Esophagus squamous epithelium (tissue), 5 donors: ENCODE measurements at regions of chr6 and their contacts with region 1.

Region 1: DNA sequence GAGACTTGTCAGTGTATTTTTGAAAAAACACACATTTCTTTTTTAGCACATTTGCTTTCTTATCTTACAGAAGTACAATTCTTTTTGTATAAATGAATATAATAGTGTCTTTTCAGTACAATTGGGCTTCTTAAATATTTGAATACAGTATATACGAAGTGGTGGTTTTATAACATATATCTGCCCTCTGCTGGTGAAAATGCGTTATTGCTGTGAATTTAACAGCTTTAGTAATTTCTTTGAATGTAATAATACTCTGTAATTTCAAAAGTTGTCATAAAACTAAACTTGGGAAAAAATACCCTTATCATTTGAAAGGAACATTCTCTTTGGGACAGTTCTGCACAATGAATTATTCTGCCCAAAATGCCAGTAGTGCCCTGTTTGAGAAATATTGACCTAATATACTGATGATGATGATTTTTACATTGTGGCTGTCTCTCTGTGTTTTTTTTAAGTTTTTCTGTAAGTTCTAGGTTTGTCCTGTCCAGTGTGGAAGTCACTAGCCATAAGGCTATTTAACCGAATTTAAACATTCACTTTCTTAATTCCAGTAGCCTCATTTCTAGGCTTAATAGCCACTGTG is 19.0 kb downstream of the SMAP1 start:
- DNase-seq: no peak
- H3K4me3 ChIP-seq: no peak overlapping the region
- H3K27ac ChIP-seq: no peak overlapping the region
- H3K4me1 ChIP-seq: peaks cover 0 to 30% (median 10%) of the 10 kb centered on the region in 3 donors
- H3K27me3 ChIP-seq: no peaks in the 10 kb centered on the region
- CTCF ChIP-seq: peak; percentile 45 to 87 (median 80)
- POLR2A ChIP-seq: no peak

Region 2: DNA sequence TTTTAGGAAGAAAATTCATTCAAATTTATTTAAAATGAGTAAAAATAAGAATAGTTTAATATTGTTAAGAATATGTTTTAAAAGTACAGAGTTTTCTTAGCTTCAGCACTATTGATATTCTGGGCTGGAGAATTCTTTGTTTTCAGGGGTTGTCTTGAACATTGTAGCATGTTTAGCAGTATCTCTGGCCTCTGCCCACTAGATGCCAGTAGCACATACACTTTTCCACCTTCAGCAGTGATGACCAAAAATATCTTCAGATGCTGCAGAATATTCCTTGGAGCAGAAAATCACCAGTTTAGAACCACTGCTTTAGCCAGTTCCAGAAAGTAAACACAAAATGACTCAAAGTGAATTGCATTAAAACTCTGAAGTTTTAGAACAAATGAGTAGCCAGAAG is 139.3 kb before region 1 on chr6:
- intact Hi-C with region 1: loop called (anchors 10 kb)
- DNase-seq: no peak
- H3K4me3 ChIP-seq: no peak overlapping the region
- H3K27ac ChIP-seq: no peak overlapping the region
- H3K4me1 ChIP-seq: no peaks in the 10 kb centered on the region
- H3K27me3 ChIP-seq: no peaks in the 10 kb centered on the region
- CTCF ChIP-seq: peak in 3 of 6 experiments; percentile 12 to 31 (median 30)
- POLR2A ChIP-seq: no peak

Region 3: GRCh38 chr6:71107911-71108420 is 421.3 kb after region 1 on chr6:
- intact Hi-C with region 1: no loop called
- DNase-seq: no peak
- H3K4me3 ChIP-seq: peak overlapping the region in 2 of 4 donors; percentile 14 to 38
- H3K27ac ChIP-seq: peak overlapping the region in 3 of 4 donors; percentile 5 to 49 (median 38)
- H3K4me1 ChIP-seq: peaks cover 0 to 32% (median 0%) of the 10 kb centered on the region in 3 donors
- H3K27me3 ChIP-seq: no peaks in the 10 kb centered on the region
- CTCF ChIP-seq: no peak
- POLR2A ChIP-seq: no peak